Activated T-helper 1 cell treated with anti-CD3 and anti-CD28 coated beads, Interleukin-12 subunit alpha, Interleukin-12 subunit beta, Interleukin-2, Interleukin-4 antibody, amounts not matched to agents 30 ng/mL and 10 ng/mL and 1 ng/mL, durations not matched to agents 14 hours and 24 hours and 36 hours (primary cell): ENCODE measurements at regions of chr15 and their contacts with region 1.

Region 1: DNA sequence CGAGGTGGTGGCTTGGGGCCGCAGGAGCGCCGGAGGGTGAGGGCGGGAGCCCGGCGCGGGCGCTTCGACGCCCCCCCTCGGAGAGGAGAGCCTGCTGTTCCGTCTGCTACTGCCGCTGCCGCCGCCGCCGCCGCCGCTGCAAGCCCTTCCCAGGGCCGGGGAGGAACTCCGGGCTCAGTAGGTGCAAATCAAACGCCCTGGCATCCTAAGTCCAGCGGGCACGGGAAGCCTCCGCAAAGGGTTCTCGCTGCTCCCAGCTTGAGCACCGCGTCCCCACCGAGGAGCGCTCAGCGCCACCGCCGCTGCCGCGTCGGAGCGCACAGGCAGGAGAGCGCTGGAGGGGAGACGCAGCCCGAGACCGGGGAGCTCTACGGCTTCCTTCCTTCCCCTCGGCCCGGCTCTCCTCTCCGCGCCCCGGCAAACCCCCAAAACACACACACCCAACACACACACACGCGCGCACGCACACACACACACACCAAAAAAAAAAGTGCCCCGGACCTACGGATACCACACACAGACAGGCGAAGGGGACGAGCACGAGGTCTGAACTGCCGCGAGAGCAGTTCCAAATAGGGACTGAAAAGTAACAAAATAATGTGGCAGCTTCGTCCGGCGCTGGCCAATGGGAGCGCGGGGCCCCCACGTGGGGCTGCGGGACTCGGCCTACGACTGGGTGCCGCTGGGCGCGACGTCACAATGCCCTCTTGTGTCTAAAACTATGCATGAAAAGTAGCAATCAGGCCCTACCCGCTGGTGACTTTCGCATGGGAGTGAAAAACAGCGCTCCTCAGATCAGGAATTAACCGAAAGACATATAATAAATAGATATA is at the start of gene TLE3:
- DNase-seq: peak; percentile 97
- H3K4me3 Mint-ChIP-seq: peak within 1 kb of the TSS; percentile 98
- H3K27ac Mint-ChIP-seq: peak within 1 kb of the TSS; percentile 99
- H3K4me1 Mint-ChIP-seq: peaks cover 57% of the 10 kb centered on the region
- H3K27me3 Mint-ChIP-seq: peaks cover 19% of the 10 kb centered on the region
- total RNA-seq, gene TLE3: 123 and 126 TPM in 2 replicates

Region 2: DNA sequence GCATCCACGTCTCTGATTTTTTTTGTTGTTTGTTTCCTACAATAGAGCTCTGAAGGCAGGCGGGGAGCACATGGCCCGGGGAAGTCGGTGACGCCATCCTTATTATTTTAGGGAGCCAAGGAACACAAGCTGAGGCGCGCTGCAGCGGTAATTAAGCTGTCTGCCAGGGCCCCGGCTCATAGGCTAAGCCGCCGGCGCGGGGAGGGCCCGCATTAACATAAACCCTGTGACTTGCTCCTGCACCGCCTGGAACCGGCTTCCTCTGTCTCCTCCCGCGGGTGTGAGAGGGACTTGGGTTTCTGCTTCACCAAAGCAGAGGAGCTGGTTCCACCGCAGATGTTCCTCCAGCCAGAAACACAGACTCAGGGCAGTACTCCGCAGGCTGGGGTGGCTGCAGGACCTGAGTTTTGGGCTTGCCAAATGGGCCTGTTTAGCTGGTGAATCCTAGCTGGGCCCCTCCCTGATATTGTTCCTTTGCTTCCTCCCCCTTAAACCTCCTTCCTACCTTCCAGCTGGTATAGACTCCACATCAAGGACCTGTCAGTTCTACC is 1302.2 kb before region 1 on chr15:
- intact Hi-C with region 1: loop called (anchors 10 kb)
- DNase-seq: peak; percentile 73
- H3K4me3 Mint-ChIP-seq: peak overlapping the region; percentile 73
- H3K27ac Mint-ChIP-seq: peak overlapping the region; percentile 87
- H3K4me1 Mint-ChIP-seq: peaks cover 98% of the 10 kb centered on the region
- H3K27me3 Mint-ChIP-seq: no peaks in the 10 kb centered on the region

Region 3: DNA sequence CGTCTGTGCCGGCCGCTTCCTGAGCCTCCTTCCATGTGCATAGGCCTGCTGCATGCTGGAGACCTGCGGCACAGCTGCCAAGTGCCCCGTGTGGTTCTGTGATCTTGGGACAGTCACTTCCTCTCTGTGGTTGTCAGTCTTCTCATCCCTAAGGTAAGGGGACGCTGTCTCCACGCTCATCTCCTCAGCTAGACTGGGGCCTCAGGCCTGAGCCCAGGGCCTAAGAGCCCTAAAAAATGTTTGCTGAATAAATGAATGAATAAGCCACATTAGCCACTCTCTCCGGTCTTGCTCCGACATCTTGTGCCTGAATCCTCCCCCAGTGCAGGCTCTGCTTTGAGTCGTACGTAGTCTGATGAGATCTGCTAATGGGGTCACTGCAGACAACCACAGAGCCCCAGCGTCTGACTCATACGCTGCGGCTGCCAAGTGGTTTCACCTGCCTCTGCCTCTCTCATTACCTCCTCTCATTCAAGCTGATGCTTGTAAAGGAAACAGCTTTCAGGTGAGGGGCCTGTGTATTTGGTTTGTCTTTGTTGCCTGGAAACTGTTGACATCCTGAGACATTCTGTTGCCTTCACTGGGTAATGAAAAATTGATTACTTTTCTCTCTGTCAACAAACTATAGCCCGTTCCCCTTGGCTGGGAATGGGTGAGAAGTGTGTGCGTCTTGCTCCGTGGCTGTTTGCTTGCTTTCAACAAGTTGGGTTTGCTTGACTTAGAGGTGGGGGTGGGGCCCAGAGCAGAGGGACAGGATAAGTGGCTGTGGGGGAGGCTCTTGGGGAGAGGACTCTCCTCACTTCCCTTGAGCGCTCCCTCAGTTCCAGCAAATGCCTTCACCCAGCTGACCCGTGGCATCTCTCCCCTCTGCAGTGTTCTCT is 629.1 kb before region 1 on chr15:
- intact Hi-C with region 1: loop called (anchors 1 kb)
- DNase-seq: peak; percentile 75
- H3K4me3 Mint-ChIP-seq: peak overlapping the region; percentile 61
- H3K27ac Mint-ChIP-seq: peak overlapping the region; percentile 90
- H3K4me1 Mint-ChIP-seq: peaks cover 24% of the 10 kb centered on the region
- H3K27me3 Mint-ChIP-seq: peaks cover 13% of the 10 kb centered on the region

Region 4: DNA sequence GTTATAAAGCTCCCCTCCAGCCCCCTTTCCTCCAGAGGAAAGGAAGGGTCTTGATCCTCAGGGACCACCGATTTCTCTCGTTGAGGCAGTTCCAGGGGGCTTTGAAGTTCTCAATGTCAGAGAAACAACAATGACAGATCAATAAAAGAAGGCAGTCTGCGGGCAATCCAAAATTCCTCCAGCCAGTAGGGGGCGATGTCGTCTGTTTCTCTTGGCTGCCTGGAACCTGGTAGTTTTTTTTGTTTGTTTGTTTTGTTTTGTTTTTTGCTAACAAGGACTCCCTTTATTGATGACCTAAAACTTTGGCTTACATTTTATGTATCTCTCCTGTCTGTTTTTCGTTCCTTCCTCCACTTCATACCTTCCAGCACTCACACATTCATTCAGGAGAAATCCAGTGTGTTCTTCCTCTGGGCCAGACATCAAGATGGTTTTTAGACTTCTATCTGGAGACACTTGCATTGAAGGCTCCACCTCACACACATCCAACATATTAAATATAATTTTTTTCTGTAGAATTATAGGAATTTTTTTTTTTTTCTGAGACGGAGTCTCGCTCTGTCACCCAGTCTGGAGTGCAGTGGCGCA is 368.3 kb before region 1 on chr15:
- intact Hi-C with region 1: loop called (anchors 1 kb)
- DNase-seq: peak; percentile 55
- H3K4me3 Mint-ChIP-seq: no peak overlapping the region
- H3K27ac Mint-ChIP-seq: no peak overlapping the region
- H3K4me1 Mint-ChIP-seq: peaks cover 59% of the 10 kb centered on the region
- H3K27me3 Mint-ChIP-seq: peaks cover 14% of the 10 kb centered on the region

Region 5: DNA sequence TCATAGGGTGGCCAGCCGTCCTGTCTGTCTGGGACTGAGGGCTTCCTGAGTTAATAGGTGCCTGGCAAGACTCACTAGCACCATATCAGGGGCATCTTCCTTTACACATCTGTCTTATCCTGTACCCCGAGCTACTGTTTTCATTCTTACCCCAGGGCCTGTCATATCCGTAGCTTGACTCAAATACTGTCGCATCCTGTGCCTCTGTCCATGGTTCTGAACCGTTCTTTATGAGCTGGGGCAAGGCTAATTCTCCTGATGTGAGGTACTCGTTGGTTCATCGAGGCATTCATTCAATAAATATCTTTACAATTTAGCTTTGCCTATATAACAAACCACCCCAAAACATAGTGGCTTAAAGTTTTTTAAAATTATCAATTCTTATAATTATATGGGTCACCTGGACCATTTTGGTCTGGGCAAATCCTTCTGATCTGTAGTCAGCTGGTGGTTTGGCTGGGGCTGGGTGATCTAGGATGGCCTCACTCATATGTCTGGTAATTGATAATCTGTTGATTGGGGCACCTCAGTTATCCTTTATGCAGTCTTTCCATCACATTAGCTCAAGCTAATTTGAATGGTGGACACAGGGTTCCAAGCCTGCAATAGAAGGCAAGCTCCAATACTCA is 121.1 kb before region 1 on chr15:
- intact Hi-C with region 1: loop called (anchors 10 kb)
- DNase-seq: peak; percentile 41
- H3K4me3 Mint-ChIP-seq: no peak overlapping the region
- H3K27ac Mint-ChIP-seq: no peak overlapping the region
- H3K4me1 Mint-ChIP-seq: no peaks in the 10 kb centered on the region
- H3K27me3 Mint-ChIP-seq: peaks cover 16% of the 10 kb centered on the region

Region 6: DNA sequence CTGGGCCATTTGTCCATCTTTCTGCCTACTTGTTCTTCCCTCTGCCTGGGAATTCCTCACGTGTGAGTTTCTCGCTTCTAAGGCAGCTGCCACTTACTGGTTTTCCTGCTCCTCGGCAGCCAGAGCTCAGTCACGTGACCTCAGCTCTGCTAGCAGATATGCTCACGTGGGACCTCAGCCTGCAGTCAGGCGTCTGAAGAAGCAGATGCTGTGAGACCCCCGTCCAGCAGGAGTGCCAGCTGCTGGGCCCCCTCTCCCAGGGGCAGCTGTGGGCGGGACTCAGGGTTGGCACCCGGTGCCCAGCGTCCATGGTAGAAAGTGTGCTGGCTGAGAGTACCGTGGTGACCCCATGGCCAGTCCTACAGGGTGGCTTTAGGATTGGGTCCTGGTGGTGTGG is 161.5 kb after region 1 on chr15:
- intact Hi-C with region 1: loop called (anchors 1 kb)
- DNase-seq: peak; percentile 15
- H3K4me3 Mint-ChIP-seq: peak overlapping the region; percentile 45
- H3K27ac Mint-ChIP-seq: no peak overlapping the region
- H3K4me1 Mint-ChIP-seq: peaks cover 37% of the 10 kb centered on the region
- H3K27me3 Mint-ChIP-seq: peaks cover 50% of the 10 kb centered on the region